Endothelial cell of umbilical vein (primary cell): ENCODE measurements at regions of chr5 and their contacts with region 1.

Region 1: GRCh38 chr5:73215891-73216610 is 43.1 kb downstream of the TMEM174 start:
- DNase-seq: peak; percentile 82
- H3K4me3 ChIP-seq: peak overlapping the region; percentile 9 to 37 (median 28)
- H3K27ac ChIP-seq: no peak overlapping the region
- H3K4me1 ChIP-seq: peaks cover 4% of the 10 kb centered on the region
- H3K27me3 ChIP-seq: peaks cover 49 to 67% of the 10 kb centered on the region in 2 experiments
- CTCF ChIP-seq: peak; percentile 83 to 85
- POLR2A ChIP-seq: no peak

Region 2: GRCh38 chr5:72760259-72760658 is 455.8 kb before region 1 on chr5:
- CTCF ChIA-PET with region 1: no interaction called
- POLR2A ChIA-PET with region 1: no interaction called
- dilution Hi-C with region 1: no loop called
- intact Hi-C with region 1: no loop called
- DNase-seq: no peak
- H3K4me3 ChIP-seq: no peak overlapping the region
- H3K27ac ChIP-seq: no peak overlapping the region
- H3K4me1 ChIP-seq: no peaks in the 10 kb centered on the region
- H3K27me3 ChIP-seq: no peaks in the 10 kb centered on the region
- CTCF ChIP-seq: no peak
- POLR2A ChIP-seq: no peak

Region 3: GRCh38 chr5:72842816-72843215 is 373.2 kb before region 1 on chr5:
- CTCF ChIA-PET with region 1: no interaction called
- POLR2A ChIA-PET with region 1: no interaction called
- dilution Hi-C with region 1: no loop called
- intact Hi-C with region 1: no loop called
- DNase-seq: peak; percentile 92
- H3K4me3 ChIP-seq: peak overlapping the region in 1 of 3 experiments; percentile 25
- H3K27ac ChIP-seq: peak overlapping the region; percentile 95
- H3K4me1 ChIP-seq: peaks cover 70% of the 10 kb centered on the region
- H3K27me3 ChIP-seq: no peaks in the 10 kb centered on the region
- CTCF ChIP-seq: peak in 1 of 2 donors; percentile 11
- POLR2A ChIP-seq: no peak

Region 4: GRCh38 chr5:73022471-73023169 is 193.4 kb before region 1 on chr5:
- CTCF ChIA-PET with region 1: no interaction called
- POLR2A ChIA-PET with region 1: no interaction called
- dilution Hi-C with region 1: no loop called
- intact Hi-C with region 1: no loop called
- DNase-seq: no peak
- H3K4me3 ChIP-seq: no peak overlapping the region
- H3K27ac ChIP-seq: no peak overlapping the region
- H3K4me1 ChIP-seq: no peaks in the 10 kb centered on the region
- H3K27me3 ChIP-seq: no peaks in the 10 kb centered on the region
- CTCF ChIP-seq: no peak
- POLR2A ChIP-seq: no peak

Region 5: GRCh38 chr5:73135429-73136054 is 80.5 kb before region 1 on chr5:
- CTCF ChIA-PET with region 1: interaction called, 12 read pairs
- POLR2A ChIA-PET with region 1: no interaction called
- dilution Hi-C with region 1: no loop called
- intact Hi-C with region 1: no loop called
- DNase-seq: peak; percentile 16
- H3K4me3 ChIP-seq: no peak overlapping the region
- H3K27ac ChIP-seq: no peak overlapping the region
- H3K4me1 ChIP-seq: no peaks in the 10 kb centered on the region
- H3K27me3 ChIP-seq: peaks cover 0 to 1% of the 10 kb centered on the region in 2 experiments
- CTCF ChIP-seq: peak; percentile 27 to 33
- POLR2A ChIP-seq: no peak

Region 6: DNA sequence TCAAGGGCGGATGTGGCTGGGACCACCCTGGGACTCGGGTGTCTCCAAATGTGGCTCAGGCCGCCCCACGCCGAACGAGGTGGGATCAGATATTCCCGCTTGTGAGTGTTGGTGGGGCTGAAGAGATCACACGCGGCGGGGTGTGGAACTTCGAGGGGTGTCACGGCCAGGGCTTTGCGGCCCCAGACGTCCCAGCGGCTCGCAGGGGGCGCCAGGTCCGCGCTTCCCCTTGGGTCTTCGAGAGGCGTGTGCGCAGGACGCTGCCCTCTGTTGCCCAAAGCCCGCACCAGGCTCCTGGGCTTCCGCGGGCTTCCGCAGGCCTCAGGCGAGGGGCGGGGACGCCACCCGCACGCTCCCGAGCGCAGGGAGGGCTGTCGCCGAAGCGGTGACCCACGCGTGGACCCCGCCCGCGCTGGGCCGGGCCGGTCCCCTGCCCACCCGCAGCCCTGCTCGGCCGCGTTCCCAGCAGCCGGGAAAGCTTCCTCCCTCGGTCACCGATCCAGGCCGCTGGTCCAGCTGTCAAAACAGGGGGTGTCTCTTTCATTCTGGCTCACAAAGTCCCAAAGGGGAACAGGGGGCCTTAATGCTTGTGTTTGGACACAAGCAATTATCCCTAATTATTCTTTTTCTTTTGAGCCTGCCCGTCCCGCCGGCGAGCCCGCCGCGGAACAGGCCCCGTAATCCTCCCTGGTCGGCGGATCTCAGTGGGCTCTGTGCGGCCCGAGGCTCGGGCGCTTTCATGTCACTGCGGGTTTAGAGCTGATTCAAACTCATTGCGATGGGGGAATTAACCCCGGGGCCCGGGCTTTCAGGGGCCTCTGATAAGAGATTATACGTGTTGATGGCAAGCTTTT is 17.5 kb after region 1 on chr5:
- CTCF ChIA-PET with region 1: interaction called, 33 read pairs
- POLR2A ChIA-PET with region 1: no interaction called
- dilution Hi-C with region 1: no loop called
- intact Hi-C with region 1: no loop called
- DNase-seq: peak; percentile 17
- H3K4me3 ChIP-seq: peak overlapping the region in 1 of 3 experiments; percentile 1
- H3K27ac ChIP-seq: no peak overlapping the region
- H3K4me1 ChIP-seq: peaks cover 5% of the 10 kb centered on the region
- H3K27me3 ChIP-seq: peaks cover 67 to 97% of the 10 kb centered on the region in 2 experiments
- CTCF ChIP-seq: peak in 1 of 2 donors; percentile 9
- POLR2A ChIP-seq: no peak

Region 7: GRCh38 chr5:73292806-73293459 is 76.9 kb after region 1 on chr5:
- CTCF ChIA-PET with region 1: interaction called, 49 read pairs
- POLR2A ChIA-PET with region 1: no interaction called
- dilution Hi-C with region 1: no loop called
- intact Hi-C with region 1: loop called (anchors 2 kb)
- DNase-seq: no peak
- H3K4me3 ChIP-seq: no peak overlapping the region
- H3K27ac ChIP-seq: no peak overlapping the region
- H3K4me1 ChIP-seq: no peaks in the 10 kb centered on the region
- H3K27me3 ChIP-seq: peaks cover 78 to 83% of the 10 kb centered on the region in 2 experiments
- CTCF ChIP-seq: no peak
- POLR2A ChIP-seq: no peak

Region 8: DNA sequence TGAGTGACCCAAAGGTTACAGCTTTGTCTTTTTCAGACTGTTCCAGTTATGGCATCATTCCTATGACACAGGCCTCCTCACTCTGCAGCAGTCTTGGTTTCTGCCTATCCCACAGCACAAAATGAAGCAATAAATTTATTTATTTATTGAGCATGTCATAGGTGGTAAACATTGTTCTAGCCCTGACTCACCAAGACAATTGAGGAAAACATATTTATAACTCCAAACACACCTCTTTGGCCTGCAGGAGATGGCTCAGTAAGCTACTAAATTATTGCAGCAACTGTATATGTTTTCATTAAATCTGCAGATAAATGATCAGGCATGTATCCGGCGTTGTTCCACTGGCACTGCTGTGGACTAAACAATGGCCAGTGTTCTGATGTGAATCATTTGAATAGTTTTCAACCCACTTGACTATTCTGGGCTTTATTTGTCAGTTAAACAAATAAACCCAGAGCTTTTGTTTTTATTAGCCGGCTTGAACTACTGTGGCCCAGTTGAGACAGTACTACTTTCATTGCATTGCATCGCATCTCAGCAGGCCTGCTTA is 149.3 kb after region 1 on chr5:
- CTCF ChIA-PET with region 1: interaction called, 12 read pairs
- POLR2A ChIA-PET with region 1: no interaction called
- dilution Hi-C with region 1: no loop called
- intact Hi-C with region 1: loop called (anchors 2 kb)
- DNase-seq: peak; percentile 70
- H3K4me3 ChIP-seq: no peak overlapping the region
- H3K27ac ChIP-seq: peak overlapping the region; percentile 40
- H3K4me1 ChIP-seq: peaks cover 25% of the 10 kb centered on the region
- H3K27me3 ChIP-seq: peaks cover 11 to 17% of the 10 kb centered on the region in 2 experiments
- CTCF ChIP-seq: no peak
- POLR2A ChIP-seq: no peak

Region 9: DNA sequence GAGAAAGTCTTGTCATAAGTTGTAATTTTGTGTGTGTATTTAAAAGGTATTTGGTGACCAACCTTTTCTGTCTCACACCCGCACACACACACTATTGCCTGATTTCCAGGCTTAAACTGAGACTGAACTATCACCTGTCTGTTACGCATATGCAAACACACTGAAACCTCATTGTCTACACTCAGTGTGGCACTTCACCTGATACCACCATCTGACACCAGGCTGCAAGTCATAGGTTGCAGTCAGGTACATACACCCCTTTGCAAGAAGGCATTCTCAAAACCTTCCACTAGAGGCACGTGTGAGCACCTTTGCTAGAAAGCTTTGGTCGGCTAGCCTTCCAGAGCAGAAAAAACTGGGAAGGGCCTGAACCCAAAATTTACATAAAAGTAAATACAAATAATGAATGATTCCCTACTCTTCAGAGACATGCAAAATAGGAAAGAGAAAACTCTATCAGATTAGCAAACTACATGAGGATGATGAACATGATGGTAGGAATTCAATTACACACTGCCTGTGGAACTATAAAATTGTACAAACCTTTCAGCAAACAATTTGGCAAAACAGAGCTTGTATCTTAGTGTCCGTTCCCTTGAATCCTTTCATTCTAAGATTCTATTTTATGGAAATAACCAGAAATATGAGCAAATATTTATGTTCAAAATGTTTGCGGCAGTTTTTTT is 238.4 kb after region 1 on chr5:
- CTCF ChIA-PET with region 1: interaction called, 277 read pairs
- POLR2A ChIA-PET with region 1: interaction called, 3 read pairs
- dilution Hi-C with region 1: no loop called
- intact Hi-C with region 1: loop called (anchors 1 kb)
- DNase-seq: peak; percentile 66
- H3K4me3 ChIP-seq: no peak overlapping the region
- H3K27ac ChIP-seq: no peak overlapping the region
- H3K4me1 ChIP-seq: no peaks in the 10 kb centered on the region
- H3K27me3 ChIP-seq: peaks cover 59 to 78% of the 10 kb centered on the region in 2 experiments
- CTCF ChIP-seq: peak; percentile 68 to 74
- POLR2A ChIP-seq: no peak